HepG2 (cell line): ENCODE measurements at regions of chr15 and their contacts with region 1.

Region 1: DNA sequence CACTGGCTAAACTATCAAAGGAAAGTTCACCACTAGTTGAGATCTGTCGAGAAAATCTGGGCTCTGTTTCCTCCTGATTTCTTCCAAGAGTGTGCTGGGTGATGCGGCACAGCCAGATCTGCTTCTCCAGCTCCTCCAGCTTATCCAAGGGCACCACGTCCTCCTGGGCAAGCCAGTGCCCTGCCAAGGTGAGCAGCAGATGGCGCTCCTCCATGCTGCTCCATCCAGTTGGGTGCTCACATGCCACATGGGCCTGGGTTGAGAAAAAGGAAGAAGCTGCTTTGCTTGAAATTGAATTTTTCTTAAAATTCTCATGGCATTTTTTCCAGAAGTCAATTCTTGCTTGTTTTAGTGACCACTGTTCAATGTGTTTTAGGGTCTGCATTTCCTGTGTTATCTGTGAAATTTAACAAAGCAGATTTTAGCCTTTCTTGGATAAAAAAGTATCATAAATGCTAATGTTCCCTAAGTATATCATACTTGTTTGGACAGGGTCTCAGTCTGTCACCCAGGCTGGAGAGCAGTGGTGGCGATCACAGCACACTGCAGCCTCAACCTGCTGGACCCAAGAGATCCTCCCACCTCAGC is 47.3 kb downstream of the EIF3J start:
- DNase-seq: peak; percentile 36
- ATAC-seq: peak; percentile 93
- H3K4me3 ChIP-seq: no peak overlapping the region
- H3K27ac ChIP-seq: no peak overlapping the region
- H3K4me1 ChIP-seq: peaks cover 6% of the 10 kb centered on the region; the same call in 1 of the 2 replicates
- H3K27me3 ChIP-seq: no peaks in the 10 kb centered on the region
- CTCF ChIP-seq: peak; percentile 63
- EP300 ChIP-seq: no peak
- POLR2A ChIP-seq: no peak
- RAD21 ChIP-seq: no peak

Region 2: DNA sequence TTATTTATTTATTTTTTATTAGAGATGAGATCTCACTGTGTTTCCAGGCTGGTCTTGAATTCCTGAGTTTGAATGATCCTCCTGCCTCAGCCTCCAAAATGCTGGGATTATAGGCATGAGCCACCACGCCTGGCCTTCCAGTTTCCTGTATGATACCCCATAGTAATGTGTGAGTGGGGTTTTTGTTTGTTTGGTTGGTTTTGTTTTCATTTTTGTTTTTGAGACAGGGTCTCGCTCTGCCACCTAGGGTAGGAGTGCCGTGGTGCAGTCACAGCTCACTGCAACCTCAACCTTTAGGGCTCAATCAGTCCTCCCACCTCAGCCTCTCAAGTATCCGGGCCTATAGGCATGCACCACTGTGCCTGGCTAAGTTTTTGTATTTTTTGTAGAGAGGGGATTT is 264.9 kb before region 1 on chr15:
- CTCF ChIA-PET with region 1: no interaction called
- POLR2A ChIA-PET with region 1: no interaction called
- in situ Hi-C with region 1: no loop called
- intact Hi-C with region 1: no loop called
- DNase-seq: no peak
- ATAC-seq: no peak
- H3K4me3 ChIP-seq: no peak overlapping the region
- H3K27ac ChIP-seq: no peak overlapping the region
- H3K4me1 ChIP-seq: no peaks in the 10 kb centered on the region
- H3K27me3 ChIP-seq: no peaks in the 10 kb centered on the region
- CTCF ChIP-seq: no peak
- EP300 ChIP-seq: no peak
- POLR2A ChIP-seq: no peak
- RAD21 ChIP-seq: no peak

Region 3: DNA sequence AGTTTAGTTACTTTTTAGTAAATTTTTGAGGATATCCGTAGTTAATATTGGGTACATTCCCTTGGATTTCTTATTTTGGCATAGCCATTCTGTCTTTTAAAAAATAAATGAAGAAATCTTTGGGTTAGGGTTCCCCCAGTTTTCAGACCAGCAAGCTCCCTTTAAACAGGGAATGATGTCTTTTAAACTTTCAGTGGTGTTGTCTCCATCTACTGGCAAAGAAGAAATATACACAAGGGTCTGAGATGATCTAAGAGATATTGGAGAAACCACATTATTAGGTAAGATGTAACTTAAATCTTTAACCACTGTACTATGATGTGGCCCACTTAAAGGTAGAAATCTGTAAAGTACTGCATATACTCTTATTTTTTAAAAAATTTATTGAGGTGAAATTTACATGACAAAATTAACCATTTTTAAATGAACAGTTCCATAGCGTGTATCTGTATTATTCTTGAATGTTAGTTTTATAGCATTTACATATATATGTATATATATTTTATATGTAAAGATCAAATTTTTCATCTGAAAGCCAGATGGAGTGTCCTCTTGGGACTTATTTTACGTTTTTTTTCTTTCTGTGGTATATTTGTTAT is 82.4 kb before region 1 on chr15:
- CTCF ChIA-PET with region 1: no interaction called
- POLR2A ChIA-PET with region 1: no interaction called
- in situ Hi-C with region 1: no loop called
- intact Hi-C with region 1: no loop called
- DNase-seq: peak; percentile 27
- ATAC-seq: peak; percentile 65
- H3K4me3 ChIP-seq: no peak overlapping the region
- H3K27ac ChIP-seq: no peak overlapping the region
- H3K4me1 ChIP-seq: no peaks in the 10 kb centered on the region
- H3K27me3 ChIP-seq: no peaks in the 10 kb centered on the region
- CTCF ChIP-seq: peak; percentile 55
- EP300 ChIP-seq: no peak
- POLR2A ChIP-seq: no peak
- RAD21 ChIP-seq: no peak

Region 4: GRCh38 chr15:44519537-44519936 is 64.7 kb before region 1 on chr15:
- CTCF ChIA-PET with region 1: no interaction called
- POLR2A ChIA-PET with region 1: no interaction called
- in situ Hi-C with region 1: no loop called
- intact Hi-C with region 1: no loop called
- DNase-seq: no peak
- ATAC-seq: no peak
- H3K4me3 ChIP-seq: no peak overlapping the region
- H3K27ac ChIP-seq: no peak overlapping the region
- H3K4me1 ChIP-seq: no peaks in the 10 kb centered on the region
- H3K27me3 ChIP-seq: no peaks in the 10 kb centered on the region
- CTCF ChIP-seq: no peak
- EP300 ChIP-seq: no peak
- POLR2A ChIP-seq: no peak
- RAD21 ChIP-seq: no peak

Region 5: DNA sequence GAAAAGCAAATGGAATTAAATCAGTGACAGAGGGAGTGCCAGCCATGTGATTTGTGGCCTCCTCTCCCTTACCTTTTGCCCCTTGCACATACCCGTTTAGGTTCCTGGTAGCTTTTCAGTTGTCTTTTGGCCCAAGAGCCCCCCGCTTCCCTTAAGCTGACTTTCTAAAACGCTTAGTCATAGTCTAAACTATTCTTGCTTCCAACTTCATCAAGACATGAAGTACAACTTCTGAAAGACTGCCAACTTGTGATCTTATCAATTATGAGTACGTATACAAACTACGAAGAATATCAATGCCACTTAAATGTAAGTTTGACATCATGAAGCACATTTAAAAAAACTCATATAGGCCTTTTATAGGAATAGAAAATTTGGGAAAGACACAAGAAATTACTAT is 14.6 kb after region 1 on chr15:
- CTCF ChIA-PET with region 1: no interaction called
- POLR2A ChIA-PET with region 1: no interaction called
- in situ Hi-C with region 1: no loop called
- intact Hi-C with region 1: no loop called
- DNase-seq: no peak
- ATAC-seq: no peak
- H3K4me3 ChIP-seq: no peak overlapping the region
- H3K27ac ChIP-seq: no peak overlapping the region
- H3K4me1 ChIP-seq: no peaks in the 10 kb centered on the region
- H3K27me3 ChIP-seq: no peaks in the 10 kb centered on the region
- CTCF ChIP-seq: no peak
- EP300 ChIP-seq: no peak
- POLR2A ChIP-seq: no peak
- RAD21 ChIP-seq: no peak

Region 6: GRCh38 chr15:44738340-44738984 is 154.2 kb after region 1 on chr15:
- CTCF ChIA-PET with region 1: interaction called, 4 read pairs
- POLR2A ChIA-PET with region 1: interaction called, 3 read pairs
- in situ Hi-C with region 1: loop called (anchors 10 kb)
- intact Hi-C with region 1: loop called (anchors 5 kb)
- DNase-seq: peak; percentile 47
- ATAC-seq: no peak
- H3K4me3 ChIP-seq: no peak overlapping the region
- H3K27ac ChIP-seq: no peak overlapping the region
- H3K4me1 ChIP-seq: no peaks in the 10 kb centered on the region
- H3K27me3 ChIP-seq: no peaks in the 10 kb centered on the region
- CTCF ChIP-seq: peak; percentile 64
- EP300 ChIP-seq: no peak
- POLR2A ChIP-seq: no peak
- RAD21 ChIP-seq: peak; percentile 52; the same call in 1 of the 2 replicates

Region 7: DNA sequence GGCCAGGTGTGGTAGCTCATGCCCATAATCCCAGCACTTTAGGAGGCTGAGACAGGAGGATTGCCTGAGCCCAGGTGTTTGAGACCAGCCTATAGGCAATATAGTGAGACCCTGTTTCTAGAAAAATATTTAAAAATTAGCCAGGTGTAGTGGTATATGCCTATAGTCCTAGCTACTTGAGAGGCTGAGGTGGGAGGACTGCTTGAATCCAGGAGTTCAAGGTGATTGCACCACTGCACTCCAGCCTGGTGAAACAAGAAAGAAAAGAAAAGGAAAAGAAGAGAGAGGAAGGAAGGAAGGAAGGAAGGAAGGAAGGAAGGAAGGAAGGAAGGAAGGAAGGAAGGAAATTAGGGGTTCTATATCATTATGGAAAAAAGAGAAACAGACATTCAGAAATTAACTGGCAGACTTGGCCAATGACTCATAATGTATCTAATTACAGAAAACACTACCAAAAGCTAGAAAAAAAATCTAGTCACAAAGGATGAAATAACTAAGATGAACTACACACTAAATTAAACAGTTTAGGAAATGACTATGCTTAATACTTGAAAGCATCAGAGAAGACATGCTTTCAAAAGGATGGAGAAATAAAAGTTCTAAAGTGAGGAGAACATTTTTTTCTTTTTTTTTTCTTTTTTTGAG is 326.8 kb after region 1 on chr15:
- CTCF ChIA-PET with region 1: no interaction called
- POLR2A ChIA-PET with region 1: no interaction called
- in situ Hi-C with region 1: loop called (anchors 25 kb)
- intact Hi-C with region 1: no loop called
- DNase-seq: no peak
- ATAC-seq: no peak
- H3K4me3 ChIP-seq: no peak overlapping the region
- H3K27ac ChIP-seq: no peak overlapping the region
- H3K4me1 ChIP-seq: peaks cover 35% of the 10 kb centered on the region
- H3K27me3 ChIP-seq: peaks cover 0 to 5% of the 10 kb centered on the region in 2 experiments; a peak in 1 of 5 replicates
- CTCF ChIP-seq: no peak
- EP300 ChIP-seq: no peak
- POLR2A ChIP-seq: no peak
- RAD21 ChIP-seq: no peak